ENCODE measurements at regions of chr3 and their contacts with region 1.

Region 1: DNA sequence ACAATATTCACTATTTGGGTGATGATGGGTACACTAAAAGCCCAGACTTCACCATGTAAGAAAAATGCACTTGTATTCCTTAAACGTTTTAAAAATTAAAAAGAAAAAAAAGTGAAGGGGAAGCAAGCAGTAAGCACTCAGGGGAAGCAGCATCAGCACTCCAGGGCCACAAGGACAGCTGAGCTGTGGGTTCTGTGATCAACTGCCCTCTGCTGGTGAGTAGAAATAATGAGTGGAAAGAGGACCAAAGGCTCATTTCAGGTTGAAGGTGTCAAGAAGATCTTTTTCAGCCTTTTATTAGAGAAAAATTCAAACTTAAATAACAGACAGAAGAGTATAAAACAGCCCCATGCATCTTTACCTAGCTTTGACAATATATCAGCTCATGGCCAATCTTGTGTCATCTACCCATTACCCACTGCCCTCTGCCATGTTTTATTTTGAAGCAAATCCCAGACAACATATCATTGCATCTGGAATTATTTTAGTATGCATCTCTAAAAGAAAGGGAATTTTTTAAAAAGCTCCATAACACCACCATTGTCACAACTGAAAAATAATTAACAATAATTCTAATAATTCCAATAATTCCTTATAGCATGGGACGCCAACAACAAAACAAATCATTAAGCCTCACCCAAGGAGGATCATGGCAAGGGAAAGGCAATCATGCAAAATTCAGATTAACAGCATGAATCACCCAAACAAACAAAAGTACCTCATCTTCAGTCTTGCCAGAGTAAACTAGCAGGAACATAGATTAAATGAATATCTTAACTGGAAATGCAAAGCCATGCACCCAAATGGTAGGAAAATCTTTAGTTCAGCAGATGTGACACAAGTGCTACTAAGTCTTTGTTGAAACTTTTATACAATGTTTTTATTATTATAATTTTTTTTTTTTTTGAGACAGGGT is 42.5 kb downstream of the TAMM41 start:
- DNase-seq: no peak

Region 2: GRCh38 chr3:11021611-11022011 is 782.6 kb before region 1 on chr3:
- intact Hi-C with region 1: loop called in 1 of 2 experiments (anchors 5 kb)
- DNase-seq: peak; percentile 42

Region 3: DNA sequence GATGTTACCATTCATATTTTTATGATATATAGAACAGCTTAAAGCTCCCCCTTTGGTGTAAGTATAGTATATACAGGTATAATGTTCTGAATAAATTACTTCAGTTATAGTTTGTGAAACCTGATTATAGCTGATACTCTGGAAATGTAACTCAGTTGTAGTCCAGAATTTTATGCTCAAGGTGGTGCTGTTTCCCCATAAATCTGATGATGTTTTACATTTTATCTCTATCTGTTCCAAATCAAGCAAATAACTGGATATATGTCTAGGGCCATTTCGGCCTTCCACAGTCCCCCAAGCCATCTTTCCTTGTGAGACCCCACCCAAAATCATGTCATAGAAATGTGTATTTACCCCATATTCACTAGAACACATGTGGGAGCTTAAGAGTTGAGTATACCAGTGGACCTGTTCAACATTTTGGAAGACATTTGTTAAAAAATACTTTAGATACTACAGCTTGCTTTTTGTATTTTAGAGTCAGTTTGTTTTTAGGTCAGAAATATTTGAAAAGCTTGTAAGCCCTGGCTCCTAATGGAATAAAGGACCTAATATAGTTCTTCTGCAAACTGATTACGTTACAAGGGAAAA is 424.9 kb before region 1 on chr3:
- intact Hi-C with region 1: loop called in 1 of 2 experiments (anchors 10 kb)
- DNase-seq: no peak

Region 4: GRCh38 chr3:11651900-11652299 is 152.3 kb before region 1 on chr3:
- intact Hi-C with region 1: loop called in 1 of 2 experiments (anchors 10 kb)
- DNase-seq: no peak

Measured in posterior vena cava (tissue), 2 donors.